ENCODE measurements at regions of chr6 and their contacts with region 1.

Region 1: GRCh38 chr6:116287689-116288282 is 8.1 kb upstream of the TSPYL1 start:
- DNase-seq: peak; percentile 52 to 65 (median 59)
- H3K4me3 ChIP-seq: no peak overlapping the region
- H3K27ac ChIP-seq: no peak overlapping the region
- H3K4me1 ChIP-seq: peaks cover 0 to 5% (median 0%) of the 10 kb centered on the region in 4 experiments
- H3K27me3 ChIP-seq: no peaks in the 10 kb centered on the region

Region 2: GRCh38 chr6:116200619-116201249 is 87.1 kb before region 1 on chr6:
- CTCF ChIA-PET with region 1: no interaction called
- POLR2A ChIA-PET with region 1: no interaction called
- DNase-seq: no peak
- H3K4me3 ChIP-seq: no peak overlapping the region
- H3K27ac ChIP-seq: no peak overlapping the region
- H3K4me1 ChIP-seq: peaks cover 0 to 2% (median 0%) of the 10 kb centered on the region in 4 experiments
- H3K27me3 ChIP-seq: no peaks in the 10 kb centered on the region

Region 3: DNA sequence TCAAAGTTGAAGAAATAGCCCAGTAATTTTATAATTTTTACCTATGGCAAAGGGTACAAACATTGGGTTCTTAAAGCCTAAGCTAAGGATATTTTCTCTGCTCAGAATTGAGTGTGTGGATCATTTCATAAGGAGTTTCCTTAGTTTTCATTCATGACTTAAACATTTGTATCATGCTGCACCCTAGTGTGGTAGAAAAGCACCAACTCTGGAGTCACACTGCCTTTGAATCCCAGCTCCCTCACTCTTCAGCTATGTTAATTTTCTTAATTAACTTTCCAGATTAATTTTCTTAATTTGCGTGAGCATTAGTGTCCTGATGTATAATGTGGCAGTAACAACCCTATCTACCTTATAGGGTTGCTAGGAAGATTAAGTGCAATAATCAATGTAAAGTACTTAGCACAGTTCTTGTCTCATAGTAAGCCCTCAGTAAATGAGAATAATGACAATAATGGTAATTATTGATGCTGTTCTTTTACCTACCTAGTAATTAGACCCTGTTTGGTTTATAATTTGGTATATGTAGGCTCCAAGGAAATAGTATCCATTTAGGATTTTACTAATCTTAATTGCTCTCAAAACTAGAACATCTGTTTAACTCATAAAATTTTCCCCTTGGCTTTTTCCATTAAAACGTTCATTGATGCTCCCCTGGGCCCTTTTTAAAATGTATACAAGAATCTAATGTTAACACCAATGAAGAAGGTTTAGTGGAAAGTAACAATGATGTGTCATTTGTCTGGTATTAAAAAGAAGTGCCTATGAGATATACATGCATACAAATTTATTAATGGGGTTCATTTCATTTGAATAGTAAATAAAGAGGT is 114.5 kb after region 1 on chr6:
- CTCF ChIA-PET with region 1: interaction called, 10 read pairs
- POLR2A ChIA-PET with region 1: no interaction called
- DNase-seq: no peak
- H3K4me3 ChIP-seq: no peak overlapping the region
- H3K27ac ChIP-seq: no peak overlapping the region
- H3K4me1 ChIP-seq: peaks cover 1 to 27% (median 14%) of the 10 kb centered on the region in 4 experiments
- H3K27me3 ChIP-seq: no peaks in the 10 kb centered on the region

Region 4: GRCh38 chr6:116434056-116434725 is 146.4 kb after region 1 on chr6:
- CTCF ChIA-PET with region 1: interaction called, 10 read pairs
- POLR2A ChIA-PET with region 1: no interaction called
- DNase-seq: no peak
- H3K4me3 ChIP-seq: no peak overlapping the region
- H3K27ac ChIP-seq: no peak overlapping the region
- H3K4me1 ChIP-seq: peaks cover 0 to 10% (median 1%) of the 10 kb centered on the region in 4 experiments
- H3K27me3 ChIP-seq: no peaks in the 10 kb centered on the region

Region 5: DNA sequence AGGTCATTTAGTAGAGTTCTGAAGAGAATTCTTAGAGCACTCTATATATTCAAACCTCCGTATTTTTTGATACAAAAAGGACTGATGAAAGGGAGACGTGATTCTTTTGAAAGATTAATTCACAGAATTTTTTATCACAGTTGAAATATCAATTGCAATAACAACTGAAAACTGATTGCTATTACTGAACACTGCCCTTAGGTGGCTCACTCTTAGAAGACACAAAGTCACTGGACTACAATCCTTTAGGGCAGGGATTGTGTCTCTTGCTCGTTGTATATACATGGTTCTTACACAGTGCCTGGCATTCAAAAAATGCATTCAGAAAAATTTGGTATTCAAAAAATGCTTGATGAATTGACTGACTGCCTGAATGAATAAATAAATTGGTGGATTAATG is 156.3 kb after region 1 on chr6:
- CTCF ChIA-PET with region 1: interaction called, 22 read pairs
- POLR2A ChIA-PET with region 1: interaction called, 3 read pairs
- DNase-seq: peak; percentile 32 to 61 (median 59)
- H3K4me3 ChIP-seq: no peak overlapping the region
- H3K27ac ChIP-seq: no peak overlapping the region
- H3K4me1 ChIP-seq: peaks cover 13 to 43% (median 24%) of the 10 kb centered on the region in 4 experiments
- H3K27me3 ChIP-seq: no peaks in the 10 kb centered on the region

Region 6: GRCh38 chr6:116531675-116532570 is 244.1 kb after region 1 on chr6:
- CTCF ChIA-PET with region 1: interaction called, 34 read pairs
- POLR2A ChIA-PET with region 1: no interaction called
- DNase-seq: peak; percentile 81 to 93 (median 91)
- H3K4me3 ChIP-seq: no peak overlapping the region
- H3K27ac ChIP-seq: no peak overlapping the region
- H3K4me1 ChIP-seq: peaks cover 0 to 9% (median 2%) of the 10 kb centered on the region in 4 experiments
- H3K27me3 ChIP-seq: no peaks in the 10 kb centered on the region

Region 7: GRCh38 chr6:116542426-116542825 is 254.6 kb after region 1 on chr6:
- CTCF ChIA-PET with region 1: interaction called, 16 read pairs
- POLR2A ChIA-PET with region 1: no interaction called
- DNase-seq: no peak
- H3K4me3 ChIP-seq: no peak overlapping the region
- H3K27ac ChIP-seq: no peak overlapping the region
- H3K4me1 ChIP-seq: no peaks in the 10 kb centered on the region
- H3K27me3 ChIP-seq: peaks cover 0 to 2% (median 0%) of the 10 kb centered on the region in 5 experiments

Measured in common myeloid progenitor, CD34-positive (primary cell).